ENCODE measurements at regions of chr3 and their contacts with region 1.

Region 1: DNA sequence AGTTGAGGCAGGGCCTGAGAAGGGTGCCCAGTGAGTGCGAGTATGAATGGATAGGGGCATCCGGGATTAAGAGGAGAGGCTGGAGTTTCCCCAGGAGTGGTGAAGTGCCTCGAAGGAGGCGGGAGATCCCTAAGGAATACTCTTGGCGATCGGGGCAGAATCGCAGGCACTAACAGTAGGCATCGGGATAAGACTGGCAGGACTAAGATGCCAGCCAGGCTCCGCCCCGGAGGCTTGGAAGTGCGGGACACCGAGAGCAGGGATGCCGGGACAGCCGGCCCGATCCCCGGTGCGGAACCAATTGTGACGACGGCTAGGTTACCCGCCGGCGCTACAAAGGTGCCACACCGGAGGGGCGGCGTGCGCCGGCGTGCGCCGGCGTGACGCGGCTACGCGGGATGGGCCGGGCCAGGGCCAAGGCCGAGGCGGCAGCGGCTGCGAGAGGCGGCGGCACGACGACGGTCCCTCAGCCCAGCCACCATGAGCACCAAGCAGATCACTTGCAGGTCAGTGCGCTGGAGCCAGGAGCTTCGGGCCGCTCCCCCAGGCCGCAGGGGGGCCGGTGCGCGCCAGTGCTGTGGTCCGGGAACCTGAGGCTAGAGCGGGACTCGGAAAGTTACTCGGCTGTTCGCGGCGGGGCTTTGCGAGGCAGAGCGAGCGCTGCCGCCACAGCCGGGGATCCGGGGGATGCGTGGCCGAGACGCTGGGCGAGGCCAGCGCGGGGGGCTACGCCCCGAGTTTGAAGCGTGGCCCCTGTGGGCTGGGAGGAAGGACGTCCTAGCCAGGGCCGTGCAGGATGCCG is at the start of gene MKRN2:
- DNase-seq: peak; percentile 92 to 95
- ATAC-seq: peak; percentile 99
- H3K4me3 ChIP-seq: peak within 1 kb of the TSS; percentile 64 to 73
- H3K27ac ChIP-seq: peak within 1 kb of the TSS; percentile 1 to 72
- H3K4me1 ChIP-seq: peaks cover 2 to 17% of the 10 kb centered on the region in 2 donors
- H3K27me3 ChIP-seq: no peaks in the 10 kb centered on the region
- total RNA-seq, gene MKRN2: 22.2 to 22.5 TPM

Region 2: DNA sequence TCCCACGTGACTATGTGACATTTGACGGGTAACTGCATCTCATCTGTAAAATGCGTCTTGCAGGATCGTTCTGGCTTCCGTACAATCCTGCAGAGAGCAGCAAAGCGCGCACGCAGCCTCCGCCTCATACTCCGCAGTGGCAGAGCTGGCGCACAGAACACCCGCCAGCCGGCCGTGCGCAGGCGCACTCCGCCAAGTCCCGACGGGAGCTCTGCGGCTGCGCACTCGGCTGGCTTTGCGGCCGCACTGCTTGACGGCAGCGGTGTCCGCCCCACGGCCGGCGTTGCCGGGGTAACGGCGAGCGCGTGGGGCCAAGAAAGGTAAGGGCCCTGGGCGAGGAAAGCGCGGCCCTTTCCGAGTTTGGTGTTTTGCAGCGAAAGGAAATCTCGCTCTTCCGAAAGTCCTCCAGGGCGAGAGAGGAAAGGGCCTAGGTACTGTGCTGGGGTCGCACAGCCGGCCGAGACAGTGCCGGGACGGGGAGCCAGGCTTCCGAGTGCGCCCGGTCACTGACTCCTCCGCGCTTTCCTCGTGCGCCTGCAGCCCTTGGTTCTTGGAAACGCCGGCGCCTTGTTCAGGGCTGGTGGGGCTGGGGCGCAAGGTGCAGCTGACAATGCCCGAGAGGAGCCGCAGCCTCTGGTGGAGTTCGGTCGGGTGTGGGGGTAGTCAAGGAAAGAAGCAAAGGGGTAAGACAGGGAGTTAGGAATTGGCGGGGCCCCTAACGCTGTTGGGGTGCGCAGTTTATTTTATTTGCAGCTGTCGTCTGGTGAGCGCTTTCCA is 72.5 kb before region 1 on chr3 and contains the start of gene TSEN2:
- intact Hi-C with region 1: no loop called
- DNase-seq: peak; percentile 96 to 98
- ATAC-seq: peak; percentile 97
- H3K4me3 ChIP-seq: peak within 1 kb of the TSS; percentile 55 to 68
- H3K27ac ChIP-seq: peak within 1 kb of the TSS in 1 of 2 donors; percentile 52
- H3K4me1 ChIP-seq: no peaks in the 10 kb centered on the region
- H3K27me3 ChIP-seq: no peaks in the 10 kb centered on the region
- total RNA-seq, gene TSEN2: 13.2 to 14.7 TPM

Region 3: GRCh38 chr3:12574661-12575060 is 17.8 kb after region 1 on chr3:
- intact Hi-C with region 1: loop called in 1 of 2 experiments (anchors 1 kb)
- DNase-seq: no peak
- ATAC-seq: no peak
- H3K4me3 ChIP-seq: no peak overlapping the region
- H3K27ac ChIP-seq: no peak overlapping the region
- H3K4me1 ChIP-seq: no peaks in the 10 kb centered on the region
- H3K27me3 ChIP-seq: no peaks in the 10 kb centered on the region

Region 4: DNA sequence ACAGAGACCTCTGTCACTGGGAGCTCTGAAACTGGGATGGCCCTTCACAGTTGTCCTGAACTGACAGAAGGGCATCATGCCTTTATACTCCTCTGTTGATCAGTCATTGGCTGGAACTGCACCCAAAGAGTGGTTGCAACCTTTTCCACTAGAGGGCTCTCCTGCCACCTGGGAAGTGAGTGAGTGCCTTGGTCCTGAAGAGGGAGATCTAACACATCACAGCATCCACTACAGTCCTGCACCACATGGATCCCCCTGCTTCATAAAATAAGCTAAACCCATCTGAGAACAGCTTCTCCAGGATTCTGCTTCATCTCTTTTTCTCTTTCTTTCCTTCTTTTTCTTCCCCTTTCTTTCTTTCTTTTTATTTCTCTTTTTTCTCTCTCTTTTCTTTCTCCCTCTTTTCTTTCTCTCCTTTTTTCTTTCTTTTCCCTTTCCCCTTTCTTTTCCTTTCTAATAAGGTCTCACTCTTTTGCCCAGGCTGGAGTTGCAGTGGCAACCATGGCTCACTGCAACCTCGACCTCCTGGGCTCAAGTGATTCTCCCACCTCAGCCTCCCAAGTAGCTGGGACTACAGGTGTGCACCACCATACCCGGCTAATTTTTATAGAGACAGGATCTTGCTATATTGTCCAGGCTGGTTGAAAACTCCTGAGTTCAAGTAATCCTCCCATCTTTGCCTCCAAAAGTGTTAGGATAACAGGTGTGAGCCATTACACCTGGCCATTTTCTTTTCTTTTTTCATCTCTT is 149.8 kb after region 1 on chr3:
- intact Hi-C with region 1: loop called in 1 of 2 experiments (anchors 10 kb)
- DNase-seq: peak in 1 of 2 donors; percentile 67
- ATAC-seq: peak; percentile 82
- H3K4me3 ChIP-seq: no peak overlapping the region
- H3K27ac ChIP-seq: no peak overlapping the region
- H3K4me1 ChIP-seq: peaks cover 0 to 2% of the 10 kb centered on the region in 2 donors
- H3K27me3 ChIP-seq: no peaks in the 10 kb centered on the region